Common myeloid progenitor, CD34-positive (primary cell): ENCODE measurements at regions of chr9 and their contacts with region 1.

Region 1: GRCh38 chr9:32579706-32580331 is 6.9 kb upstream of the NDUFB6 start:
- DNase-seq: peak; percentile 69 to 80 (median 72)
- H3K4me3 ChIP-seq: no peak overlapping the region
- H3K27ac ChIP-seq: no peak overlapping the region
- H3K4me1 ChIP-seq: no peaks in the 10 kb centered on the region
- H3K27me3 ChIP-seq: peaks cover 0 to 14% (median 9%) of the 10 kb centered on the region in 5 experiments

Region 2: DNA sequence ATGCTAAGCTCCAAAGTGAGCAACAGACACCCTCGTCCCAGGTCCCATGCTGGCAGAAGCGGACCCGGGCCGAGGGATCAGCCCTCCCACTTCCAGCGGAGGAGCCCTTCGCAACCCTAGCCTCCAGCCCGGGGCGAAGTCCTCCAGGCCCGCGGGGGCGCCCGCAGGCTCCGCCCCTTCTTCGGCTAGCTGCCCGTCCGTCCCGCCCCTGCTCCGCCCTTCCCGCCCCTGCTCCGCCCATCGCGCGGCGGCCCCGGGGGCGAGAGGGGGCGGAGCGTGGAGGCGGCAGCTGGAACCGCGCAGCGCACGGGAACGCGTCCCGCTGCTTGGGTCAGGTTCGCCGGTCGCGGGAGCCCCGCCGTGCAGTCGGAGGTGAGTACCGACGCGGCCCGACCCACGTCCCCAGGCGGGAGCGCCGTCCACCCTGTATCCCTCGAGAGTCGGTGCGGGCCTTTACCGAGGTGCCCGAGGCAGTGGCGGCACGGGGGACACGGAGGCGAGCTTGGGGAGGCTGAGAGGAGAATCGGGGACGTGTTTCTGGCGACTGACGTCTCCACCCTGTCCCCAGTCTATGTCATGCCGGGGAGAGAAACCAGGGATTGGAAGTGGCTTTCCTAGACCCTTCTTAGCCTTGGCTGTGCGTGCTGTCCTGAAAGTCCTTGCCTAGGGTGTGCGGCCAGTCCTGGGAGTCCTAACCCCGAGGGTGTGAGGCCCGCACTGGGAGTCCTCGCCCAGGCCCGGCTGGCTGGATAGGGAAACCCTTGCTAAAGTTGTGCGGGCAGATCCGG is 195.3 kb before region 1 on chr9 and contains the start of gene ACO1:
- CTCF ChIA-PET with region 1: interaction called, 257 read pairs
- POLR2A ChIA-PET with region 1: interaction called, 3 read pairs
- DNase-seq: peak; percentile 79 to 84 (median 81)
- H3K4me3 ChIP-seq: peak within 1 kb of the TSS; percentile 72 to 98 (median 89)
- H3K27ac ChIP-seq: peak within 1 kb of the TSS in 1 of 2 experiments; percentile 43
- H3K4me1 ChIP-seq: peaks cover 3 to 24% (median 14%) of the 10 kb centered on the region in 4 experiments
- H3K27me3 ChIP-seq: peaks cover 4 to 14% (median 9%) of the 10 kb centered on the region in 5 experiments

Region 3: DNA sequence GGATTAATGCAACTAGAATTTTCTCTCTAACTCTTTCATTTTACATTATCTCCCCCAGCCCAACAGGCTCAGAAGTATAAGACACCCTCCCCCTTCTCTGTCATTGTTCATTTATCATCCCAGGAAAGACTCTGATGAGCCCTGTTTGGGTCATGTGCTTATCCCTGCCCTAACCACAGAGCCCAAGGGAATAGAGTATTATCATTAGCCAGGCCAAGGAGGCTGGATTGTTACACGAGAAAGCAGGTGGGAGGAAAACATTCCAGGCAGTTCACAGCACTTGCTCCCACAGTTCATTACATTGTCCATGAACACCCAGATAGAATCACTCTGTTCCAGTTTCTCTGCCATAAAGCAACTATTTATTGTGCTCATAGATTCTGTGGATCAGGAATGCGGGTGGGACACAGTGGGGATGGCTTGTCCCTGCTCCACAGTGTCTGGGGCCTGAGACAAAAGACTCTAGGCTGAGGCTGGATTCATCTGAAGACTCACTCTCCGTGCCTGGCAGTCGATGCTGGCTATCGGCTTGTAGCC is 144.0 kb after region 1 on chr9:
- CTCF ChIA-PET with region 1: no interaction called
- POLR2A ChIA-PET with region 1: no interaction called
- DNase-seq: no peak
- H3K4me3 ChIP-seq: no peak overlapping the region
- H3K27ac ChIP-seq: no peak overlapping the region
- H3K4me1 ChIP-seq: no peaks in the 10 kb centered on the region
- H3K27me3 ChIP-seq: peaks cover 0 to 14% (median 4%) of the 10 kb centered on the region in 5 experiments